ENCODE measurements at regions of chrX and their contacts with region 1.

Region 1: DNA sequence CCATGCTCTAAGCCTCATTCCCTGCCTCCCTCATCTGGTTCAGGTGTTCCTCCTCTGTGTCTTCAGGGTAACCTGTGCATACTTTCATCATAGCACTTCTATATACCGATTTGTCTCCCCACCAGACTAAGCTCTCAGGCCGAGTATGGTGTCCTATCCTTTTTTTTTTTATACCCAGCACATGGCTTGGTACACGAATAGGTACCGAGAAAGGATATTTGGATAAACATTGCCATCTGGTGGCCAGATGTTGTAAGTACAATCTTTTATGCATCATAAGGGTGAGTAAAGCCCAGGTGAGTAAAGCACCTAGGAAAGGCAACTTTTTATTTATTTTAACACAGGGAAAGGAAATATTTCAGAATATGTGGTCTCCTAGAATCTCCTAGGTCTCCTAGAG is 68.4 kb downstream of the MID2 start:
- DNase-seq: peak; percentile 57
- H3K4me3 ChIP-seq: no peak overlapping the region
- H3K27ac ChIP-seq: no peak overlapping the region
- H3K4me1 ChIP-seq: no peaks in the 10 kb centered on the region
- H3K27me3 ChIP-seq: no peaks in the 10 kb centered on the region
- CTCF ChIP-seq: peak; percentile 46 to 53

Region 2: DNA sequence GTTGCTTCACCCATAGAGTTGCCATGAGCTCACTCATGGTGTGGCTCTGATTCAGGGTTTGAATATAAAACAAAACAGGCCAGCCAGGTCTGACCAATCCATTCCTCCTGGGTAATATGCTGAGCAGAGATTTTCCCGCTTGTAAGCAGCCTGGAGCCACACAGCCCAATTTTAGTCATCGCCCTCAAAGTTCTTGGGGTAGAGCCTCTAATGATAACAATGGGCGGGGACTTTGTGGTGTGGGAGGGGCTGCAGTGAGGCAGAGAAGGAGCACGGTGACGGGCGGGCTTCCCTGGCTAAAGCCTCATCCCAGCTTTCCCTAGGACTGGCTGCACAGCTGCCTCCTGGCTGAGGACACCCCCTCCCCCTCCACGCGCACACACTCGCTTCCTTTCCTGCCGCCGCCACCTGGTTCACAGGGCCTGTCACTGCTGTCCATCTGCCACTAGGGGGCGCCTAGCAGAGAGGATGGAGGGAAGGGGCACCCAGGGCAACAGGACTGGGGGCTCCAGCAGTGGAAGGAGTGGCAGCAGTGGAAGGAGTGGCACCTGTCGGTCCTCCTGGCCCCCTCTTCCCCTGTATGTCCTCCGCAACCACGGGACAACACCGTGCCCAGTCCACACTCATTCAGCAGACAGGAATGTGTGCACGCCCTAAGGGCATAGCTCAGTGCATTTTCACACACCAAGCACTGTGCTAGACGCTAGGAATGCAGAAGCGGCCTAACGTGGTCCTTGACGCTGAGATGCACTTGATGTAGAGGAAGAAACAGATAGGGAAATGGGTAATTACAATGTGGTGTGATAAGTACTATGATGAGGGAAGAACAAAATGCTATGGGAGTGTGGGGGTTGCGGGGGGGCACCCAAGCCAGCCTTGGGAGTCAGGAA is 238.9 kb before region 1 on chrX:
- CTCF ChIA-PET with region 1: no interaction called
- dilution Hi-C with region 1: no loop called
- in situ Hi-C with region 1: no loop called
- intact Hi-C with region 1: loop called (anchors 1 kb)
- DNase-seq: peak; percentile 91
- H3K4me3 ChIP-seq: no peak overlapping the region
- H3K27ac ChIP-seq: no peak overlapping the region
- H3K4me1 ChIP-seq: peaks cover 6% of the 10 kb centered on the region
- H3K27me3 ChIP-seq: no peaks in the 10 kb centered on the region
- CTCF ChIP-seq: peak; percentile 48 to 62

Region 3: GRCh38 chrX:107935664-107936433 is 41.8 kb after region 1 on chrX:
- CTCF ChIA-PET with region 1: no interaction called
- dilution Hi-C with region 1: no loop called
- in situ Hi-C with region 1: no loop called
- intact Hi-C with region 1: no loop called
- DNase-seq: peak; percentile 60
- H3K4me3 ChIP-seq: peak overlapping the region; percentile 38 to 65 (median 55)
- H3K27ac ChIP-seq: peak overlapping the region; percentile 47
- H3K4me1 ChIP-seq: peaks cover 6% of the 10 kb centered on the region
- H3K27me3 ChIP-seq: no peaks in the 10 kb centered on the region
- CTCF ChIP-seq: no peak